CD14-positive monocyte (primary cell): ENCODE measurements at regions of chr4 and their contacts with region 1.

Region 1: DNA sequence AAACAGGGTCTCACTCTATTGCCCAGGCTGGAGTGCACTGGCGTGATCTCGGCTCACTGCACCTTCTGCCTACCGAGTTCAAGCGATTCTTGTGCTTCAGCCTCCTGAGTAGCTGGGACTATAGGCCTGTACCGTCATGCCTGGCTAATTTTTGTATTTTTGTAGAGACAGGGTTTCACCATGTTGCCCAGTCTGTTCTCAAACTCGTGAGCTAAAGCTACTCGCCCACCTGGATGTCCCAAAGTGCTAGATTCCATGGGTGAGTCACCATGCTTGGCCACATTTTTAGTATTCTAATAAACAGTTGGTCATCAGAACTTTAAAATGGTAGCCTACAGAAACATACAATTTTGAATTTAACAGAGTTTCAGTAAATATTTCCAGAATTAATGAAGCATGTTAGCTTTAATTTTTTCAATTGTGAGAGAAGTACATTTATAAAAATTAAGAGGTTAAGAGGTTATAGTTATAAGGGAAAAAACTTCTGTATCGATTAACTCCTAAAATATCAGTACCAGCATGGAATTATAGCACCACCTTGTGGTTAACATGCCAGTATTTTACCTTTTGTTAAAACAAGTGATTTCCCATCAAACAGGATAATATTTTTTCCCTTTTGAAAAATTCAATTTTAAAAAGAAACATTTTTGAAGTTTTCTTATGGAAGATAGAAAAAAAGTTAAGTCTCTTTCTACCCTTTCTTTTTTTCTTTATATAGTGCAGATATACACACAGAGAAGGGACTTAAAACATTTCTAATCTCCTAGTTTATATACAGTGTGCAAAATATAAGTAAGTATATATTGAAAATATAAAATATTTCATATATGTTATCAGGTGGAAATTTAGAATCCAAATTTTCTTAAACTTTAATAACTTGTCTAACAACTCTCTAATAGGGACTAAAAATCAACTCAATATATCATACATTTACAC is 35.4 kb downstream of the CEP44 start:
- DNase-seq: peak in 2 of 3 donors; percentile 18 to 38
- H3K4me3 ChIP-seq: no peak overlapping the region
- H3K4me3 Mint-ChIP-seq: no peak overlapping the region
- H3K27ac ChIP-seq: no peak overlapping the region
- H3K27ac Mint-ChIP-seq: no peak overlapping the region
- H3K4me1 ChIP-seq: no peaks in the 10 kb centered on the region
- H3K4me1 Mint-ChIP-seq: no peaks in the 10 kb centered on the region
- H3K27me3 ChIP-seq: no peaks in the 10 kb centered on the region
- H3K27me3 Mint-ChIP-seq: no peaks in the 10 kb centered on the region
- CTCF ChIP-seq: peak; percentile 84

Region 2: GRCh38 chr4:174222266-174222872 is 96.7 kb before region 1 on chr4:
- intact Hi-C with region 1: loop called (anchors 5 to 10 kb)
- DNase-seq: peak in 1 of 3 donors; percentile 30
- H3K4me3 ChIP-seq: no peak overlapping the region
- H3K4me3 Mint-ChIP-seq: no peak overlapping the region
- H3K27ac ChIP-seq: no peak overlapping the region
- H3K27ac Mint-ChIP-seq: no peak overlapping the region
- H3K4me1 ChIP-seq: peaks cover 0 to 6% of the 10 kb centered on the region in 2 donors
- H3K4me1 Mint-ChIP-seq: peaks cover 9% of the 10 kb centered on the region
- H3K27me3 ChIP-seq: peaks cover 60 to 73% of the 10 kb centered on the region in 2 donors
- H3K27me3 Mint-ChIP-seq: peaks cover 54 to 74% (median 62%) of the 10 kb centered on the region in 3 donors
- CTCF ChIP-seq: peak; percentile 77

Region 3: DNA sequence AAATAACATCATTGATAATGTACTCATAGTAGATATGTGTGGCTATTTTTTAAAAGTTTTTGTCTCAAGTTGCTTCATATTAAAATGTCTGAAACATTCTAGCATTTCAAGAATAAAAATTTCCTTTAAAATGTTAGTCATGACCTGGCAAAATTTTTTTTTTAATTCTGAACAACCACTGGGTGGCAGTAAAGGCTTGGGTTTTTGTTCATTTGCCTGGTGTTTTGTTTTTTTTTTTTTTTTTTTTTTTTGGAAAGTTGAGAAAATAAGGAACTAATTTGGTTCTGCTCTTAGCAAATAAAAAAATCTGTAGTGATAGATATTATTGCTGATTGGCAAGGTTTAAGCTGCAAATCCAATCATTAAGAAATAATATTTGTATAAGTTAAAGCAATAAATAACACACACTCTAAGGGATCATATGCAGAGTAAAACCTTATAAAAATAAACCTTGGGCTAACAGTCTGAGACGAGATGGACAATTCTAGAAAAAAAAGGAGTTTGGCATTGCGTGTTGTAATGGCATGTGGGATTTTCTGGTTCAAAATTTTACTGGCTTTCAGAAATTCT is 46.0 kb after region 1 on chr4:
- intact Hi-C with region 1: no loop called
- DNase-seq: peak; percentile 20 to 60 (median 49)
- H3K4me3 ChIP-seq: no peak overlapping the region
- H3K4me3 Mint-ChIP-seq: no peak overlapping the region
- H3K27ac ChIP-seq: no peak overlapping the region
- H3K27ac Mint-ChIP-seq: no peak overlapping the region
- H3K4me1 ChIP-seq: no peaks in the 10 kb centered on the region
- H3K4me1 Mint-ChIP-seq: no peaks in the 10 kb centered on the region
- H3K27me3 ChIP-seq: no peaks in the 10 kb centered on the region
- H3K27me3 Mint-ChIP-seq: no peaks in the 10 kb centered on the region
- CTCF ChIP-seq: peak; percentile 74